Heart left ventricle (tissue), 16 donors: ENCODE measurements at regions of chr2 and their contacts with region 1.

Region 1: DNA sequence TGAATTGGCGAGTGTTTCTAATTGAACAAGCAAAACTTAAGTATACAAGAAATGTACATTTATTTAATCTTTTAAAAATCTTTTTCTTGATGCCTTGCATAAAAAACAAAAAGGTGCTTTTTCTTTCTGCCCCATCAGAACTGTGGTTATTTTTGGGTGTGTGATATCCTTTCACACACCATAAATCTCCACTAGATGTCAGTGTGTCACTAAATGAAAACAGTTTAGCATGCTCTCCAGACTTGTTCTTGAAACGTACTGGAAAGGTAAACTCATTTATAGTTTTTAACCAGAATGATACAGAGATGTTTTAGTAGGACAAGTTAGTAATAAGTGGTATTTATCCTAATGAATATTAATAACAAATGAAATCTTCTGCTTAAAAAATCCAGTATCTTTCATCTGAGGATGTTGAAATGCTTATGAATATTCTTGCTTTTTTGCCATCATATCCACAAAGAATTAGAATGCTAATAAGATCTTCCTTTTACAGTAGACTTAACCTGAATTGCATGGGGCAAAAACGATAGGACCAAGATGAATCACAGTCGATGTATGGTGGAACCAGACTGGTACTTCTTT is 96.8 kb downstream of the UBE2E3 start:
- DNase-seq: no peak
- ATAC-seq: peak in 3 of 4 donors; percentile 53 to 68 (median 65)
- H3K4me3 ChIP-seq: no peak overlapping the region
- H3K27ac ChIP-seq: no peak overlapping the region
- H3K4me1 ChIP-seq: peaks cover 0 to 18% (median 9%) of the 10 kb centered on the region in 12 donors
- H3K27me3 ChIP-seq: no peaks in the 10 kb centered on the region
- CTCF ChIP-seq: peak; percentile 55 to 84 (median 72)
- POLR2A ChIP-seq: no peak

Region 2: GRCh38 chr2:180125245-180125962 is 951.8 kb before region 1 on chr2:
- intact Hi-C with region 1: loop called in 1 of 10 experiments (anchors 5 kb)
- DNase-seq: peak; percentile 16 to 64 (median 54)
- ATAC-seq: peak; percentile 73 to 98 (median 94)
- H3K4me3 ChIP-seq: no peak overlapping the region
- H3K27ac ChIP-seq: no peak overlapping the region
- H3K4me1 ChIP-seq: peaks cover 0 to 3% (median 0%) of the 10 kb centered on the region in 12 donors
- H3K27me3 ChIP-seq: peaks cover 0 to 9% (median 0%) of the 10 kb centered on the region in 9 donors
- CTCF ChIP-seq: peak; percentile 22 to 64 (median 51)
- POLR2A ChIP-seq: no peak

Region 3: GRCh38 chr2:181058378-181059269 is 18.6 kb before region 1 on chr2:
- intact Hi-C with region 1: no loop called
- DNase-seq: no peak
- ATAC-seq: no peak
- H3K4me3 ChIP-seq: no peak overlapping the region
- H3K27ac ChIP-seq: no peak overlapping the region
- H3K4me1 ChIP-seq: peaks cover 0 to 9% (median 0%) of the 10 kb centered on the region in 12 donors
- H3K27me3 ChIP-seq: no peaks in the 10 kb centered on the region
- CTCF ChIP-seq: peak; percentile 50 to 69 (median 60)
- POLR2A ChIP-seq: no peak

Region 4: DNA sequence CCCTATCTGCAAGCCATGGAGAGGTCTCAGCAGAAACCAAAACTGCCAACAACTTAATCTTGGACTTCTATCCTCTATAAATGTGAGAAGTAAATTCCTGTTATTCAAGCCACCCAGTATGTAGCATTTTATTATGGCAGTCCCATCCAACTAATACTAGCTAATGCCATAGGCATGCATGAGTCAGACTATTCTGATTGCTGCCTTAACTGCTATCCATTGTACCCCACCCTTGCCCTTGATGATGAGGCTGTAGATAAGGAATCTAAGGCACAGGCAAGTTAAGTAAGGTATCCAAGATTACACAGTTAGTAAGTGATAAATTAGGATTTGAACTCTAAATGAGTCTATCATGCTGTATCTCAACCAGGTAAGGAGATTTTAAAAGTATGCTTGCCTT is 126.2 kb after region 1 on chr2:
- intact Hi-C with region 1: no loop called
- DNase-seq: no peak
- ATAC-seq: no peak
- H3K4me3 ChIP-seq: no peak overlapping the region
- H3K27ac ChIP-seq: no peak overlapping the region
- H3K4me1 ChIP-seq: no peaks in the 10 kb centered on the region
- H3K27me3 ChIP-seq: no peaks in the 10 kb centered on the region
- CTCF ChIP-seq: no peak
- POLR2A ChIP-seq: no peak

Region 5: GRCh38 chr2:181231886-181232621 is 154.8 kb after region 1 on chr2:
- intact Hi-C with region 1: no loop called
- DNase-seq: no peak
- ATAC-seq: no peak
- H3K4me3 ChIP-seq: no peak overlapping the region
- H3K27ac ChIP-seq: no peak overlapping the region
- H3K4me1 ChIP-seq: no peaks in the 10 kb centered on the region
- H3K27me3 ChIP-seq: no peaks in the 10 kb centered on the region
- CTCF ChIP-seq: peak in 1 of 12 donors; percentile 11
- POLR2A ChIP-seq: no peak